MCF 10A (cell line): ENCODE measurements at regions of chr12 and their contacts with region 1.

Region 1: GRCh38 chr12:2341871-2342270 is 289.1 kb downstream of the CACNA1C start:
- DNase-seq: peak; percentile 82
- H3K4me3 Mint-ChIP-seq: no peak overlapping the region
- H3K27ac Mint-ChIP-seq: no peak overlapping the region
- H3K4me1 Mint-ChIP-seq: peaks cover 9% of the 10 kb centered on the region
- H3K27me3 Mint-ChIP-seq: peaks cover 22% of the 10 kb centered on the region
- CTCF ChIP-seq: no peak

Region 2: GRCh38 chr12:1962051-1963020 is 379.5 kb before region 1 on chr12:
- CTCF ChIA-PET with region 1: no interaction called
- POLR2A ChIA-PET with region 1: no interaction called
- intact Hi-C with region 1: no loop called
- DNase-seq: no peak
- H3K4me3 Mint-ChIP-seq: no peak overlapping the region
- H3K27ac Mint-ChIP-seq: no peak overlapping the region
- H3K4me1 Mint-ChIP-seq: no peaks in the 10 kb centered on the region
- H3K27me3 Mint-ChIP-seq: peaks cover 47% of the 10 kb centered on the region
- CTCF ChIP-seq: no peak

Region 3: GRCh38 chr12:2395354-2395977 is 53.6 kb after region 1 on chr12:
- CTCF ChIA-PET with region 1: no interaction called
- POLR2A ChIA-PET with region 1: no interaction called
- intact Hi-C with region 1: loop called (anchors 5 kb)
- DNase-seq: peak; percentile 59
- H3K4me3 Mint-ChIP-seq: no peak overlapping the region
- H3K27ac Mint-ChIP-seq: no peak overlapping the region
- H3K4me1 Mint-ChIP-seq: peaks cover 19% of the 10 kb centered on the region
- H3K27me3 Mint-ChIP-seq: peaks cover 11% of the 10 kb centered on the region
- CTCF ChIP-seq: peak; percentile 84